PC-3 (cell line): ENCODE measurements at regions of chr7 and their contacts with region 1.

Region 1: DNA sequence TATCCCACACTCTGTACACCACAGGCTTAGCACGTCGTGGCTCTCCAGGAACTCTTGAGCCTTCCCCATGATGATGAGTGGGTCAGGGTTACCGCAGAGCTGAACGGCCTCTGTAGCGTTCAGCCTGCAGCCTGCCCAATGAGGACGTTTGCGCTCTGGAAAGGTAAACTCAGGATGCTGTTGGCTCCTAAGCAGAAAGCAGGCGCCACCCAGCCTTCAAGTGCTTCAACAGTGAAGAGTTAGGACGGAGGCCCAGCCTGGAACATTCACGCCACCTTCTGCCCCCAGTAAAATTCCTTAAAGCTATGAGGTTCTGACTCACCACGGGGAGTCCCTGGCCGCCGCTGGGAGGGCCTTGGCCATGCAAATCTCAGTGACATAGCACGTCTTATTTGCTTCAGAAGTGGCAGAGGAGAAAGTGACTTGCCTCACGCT is 161.5 kb upstream of the SH2B2 start:
- DNase-seq: peak; percentile 91
- ATAC-seq: peak; percentile 99
- H3K4me3 ChIP-seq: no peak overlapping the region
- H3K27ac ChIP-seq: peak overlapping the region; percentile 79
- H3K4me1 ChIP-seq: peaks cover 28% of the 10 kb centered on the region
- H3K27me3 ChIP-seq: no peaks in the 10 kb centered on the region
- CTCF ChIP-seq: peak; percentile 57

Region 2: DNA sequence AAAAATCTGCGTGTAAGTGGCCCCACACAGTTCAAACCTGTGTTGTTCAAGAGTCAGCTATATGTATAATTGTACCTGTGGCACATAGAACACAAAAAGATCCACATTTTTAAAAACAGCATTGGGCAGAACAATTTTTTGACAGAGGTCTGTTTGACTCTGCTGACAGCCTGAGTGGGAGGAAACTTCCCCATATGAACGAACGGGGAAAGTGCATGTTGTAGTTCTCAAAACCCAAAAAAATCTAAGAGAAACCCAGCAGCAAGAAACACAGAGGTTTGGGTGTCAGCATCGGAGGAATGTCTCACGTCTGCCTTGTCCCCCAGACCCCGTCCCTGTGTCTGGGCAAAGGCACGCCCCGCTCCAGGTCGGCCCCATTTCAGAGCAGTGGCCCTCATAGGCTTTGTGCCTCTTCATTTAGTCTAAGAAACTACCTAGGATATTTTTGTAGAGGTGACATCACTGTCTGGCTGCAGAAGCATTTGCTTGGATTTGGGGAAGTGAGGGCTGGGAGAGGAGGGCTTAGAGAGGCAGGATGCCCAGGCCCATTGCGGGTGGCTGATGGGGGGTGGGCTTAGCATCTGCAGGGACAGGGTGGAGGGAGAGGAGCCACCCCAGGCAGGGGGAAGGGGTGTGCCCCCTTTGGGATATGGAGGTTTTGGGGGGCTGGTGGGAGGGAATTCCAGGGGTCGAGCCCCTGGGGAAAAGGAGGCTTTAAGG is 296.7 kb before region 1 on chr7:
- CTCF ChIA-PET with region 1: no interaction called
- POLR2A ChIA-PET with region 1: no interaction called
- intact Hi-C with region 1: no loop called
- DNase-seq: no peak
- ATAC-seq: no peak
- H3K4me3 ChIP-seq: no peak overlapping the region
- H3K27ac ChIP-seq: no peak overlapping the region
- H3K4me1 ChIP-seq: no peaks in the 10 kb centered on the region
- H3K27me3 ChIP-seq: no peaks in the 10 kb centered on the region
- CTCF ChIP-seq: no peak

Region 3: DNA sequence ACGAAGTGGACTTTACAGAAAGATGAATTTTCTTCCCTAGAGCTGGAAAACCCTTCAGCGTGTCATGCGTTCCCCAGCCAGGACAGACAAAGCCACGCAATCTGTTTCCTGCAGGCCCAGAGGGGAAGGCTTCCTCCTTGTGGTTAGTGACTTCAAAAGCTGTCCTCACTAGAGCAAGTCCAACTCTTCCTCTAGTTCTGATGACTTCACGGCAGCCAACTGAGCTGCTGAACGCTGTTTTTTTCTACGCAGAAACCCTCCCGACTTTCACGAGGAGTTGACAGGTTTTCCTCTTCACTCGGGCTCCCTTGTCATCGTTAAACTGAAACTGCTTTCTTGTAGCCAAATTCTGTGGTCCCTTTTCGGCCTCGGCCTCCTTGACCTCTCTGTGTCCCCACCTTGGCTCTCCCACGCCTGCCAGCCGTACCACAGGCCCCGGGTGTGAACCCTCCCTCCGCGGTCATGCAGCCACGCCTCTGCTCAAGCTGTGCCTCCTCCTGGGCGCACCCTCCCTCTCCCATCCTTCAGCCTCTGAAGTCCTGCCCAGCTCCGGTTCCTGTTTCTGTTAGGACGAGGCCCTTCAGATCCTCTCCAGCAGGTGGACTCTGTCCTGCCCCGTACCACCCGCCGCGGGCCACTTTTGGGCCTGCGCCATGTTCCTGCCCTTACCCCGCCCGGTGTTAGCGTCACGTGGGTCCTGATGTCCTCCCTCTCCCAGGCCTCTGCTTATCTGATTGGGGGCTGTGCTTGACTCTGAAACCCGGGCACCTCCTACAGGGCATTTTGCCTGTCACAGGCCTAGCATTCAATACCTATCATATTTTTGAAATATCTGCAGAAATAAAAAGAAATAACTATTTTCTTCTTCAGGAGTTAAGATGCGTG is 268.4 kb before region 1 on chr7:
- CTCF ChIA-PET with region 1: no interaction called
- POLR2A ChIA-PET with region 1: no interaction called
- intact Hi-C with region 1: loop called (anchors 10 kb)
- DNase-seq: peak; percentile 94
- ATAC-seq: peak; percentile 96
- H3K4me3 ChIP-seq: peak overlapping the region; percentile 56
- H3K27ac ChIP-seq: peak overlapping the region; percentile 90
- H3K4me1 ChIP-seq: peaks cover 23% of the 10 kb centered on the region
- H3K27me3 ChIP-seq: no peaks in the 10 kb centered on the region
- CTCF ChIP-seq: peak; percentile 62

Region 4: DNA sequence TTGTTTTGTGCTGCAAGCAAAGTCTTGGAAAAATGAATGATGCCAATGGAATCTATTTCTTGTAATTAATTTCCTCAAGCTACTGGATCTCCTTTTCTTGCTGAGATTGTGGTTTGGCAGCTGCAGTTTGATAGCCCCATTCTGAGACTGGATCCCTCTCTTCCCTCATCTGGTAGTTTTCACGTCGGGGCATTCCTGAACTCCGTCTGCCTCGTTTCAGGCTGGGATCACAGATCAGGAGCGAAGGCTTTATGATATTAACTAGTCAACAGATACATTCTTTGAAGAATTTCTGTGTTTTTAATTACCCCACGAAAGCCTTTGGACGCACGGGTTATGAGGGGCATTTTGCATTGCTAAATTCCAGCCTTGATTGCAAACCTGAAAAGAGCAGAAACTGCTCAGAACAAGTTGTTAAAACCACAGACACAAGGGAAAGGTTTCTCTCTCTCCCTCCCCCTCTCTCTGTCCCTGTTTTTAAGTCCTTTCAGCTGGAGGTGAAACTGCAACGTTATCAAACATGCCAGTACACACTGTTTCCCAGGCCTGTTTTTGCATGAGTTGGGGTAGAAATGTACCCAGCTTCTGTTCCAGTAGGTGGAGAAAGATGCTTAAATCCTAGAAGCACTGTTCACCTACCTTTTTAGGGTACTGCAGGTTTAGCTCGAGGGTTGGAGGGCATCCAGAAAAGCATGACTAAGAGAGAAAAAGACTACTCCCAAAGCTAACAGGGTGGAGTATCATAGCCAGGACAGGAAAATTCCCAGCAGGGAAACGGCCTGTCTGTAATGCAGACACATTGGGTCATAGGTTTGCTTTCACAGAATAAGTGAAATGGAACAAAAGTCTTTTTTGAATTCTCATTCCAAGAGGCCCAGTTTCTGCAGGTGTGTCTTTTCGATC is 183.4 kb before region 1 on chr7:
- CTCF ChIA-PET with region 1: interaction called, 4 read pairs
- POLR2A ChIA-PET with region 1: no interaction called
- intact Hi-C with region 1: loop called (anchors 5 kb)
- DNase-seq: peak; percentile 96
- ATAC-seq: peak; percentile 93
- H3K4me3 ChIP-seq: peak overlapping the region; percentile 48; the same call in 1 of the 2 replicates
- H3K27ac ChIP-seq: peak overlapping the region; percentile 98
- H3K4me1 ChIP-seq: peaks cover 37% of the 10 kb centered on the region
- H3K27me3 ChIP-seq: no peaks in the 10 kb centered on the region
- CTCF ChIP-seq: peak; percentile 41

Region 5: GRCh38 chr7:102040569-102040968 is 84.6 kb before region 1 on chr7:
- CTCF ChIA-PET with region 1: interaction called, 12 read pairs
- POLR2A ChIA-PET with region 1: no interaction called
- intact Hi-C with region 1: no loop called
- DNase-seq: no peak
- ATAC-seq: no peak
- H3K4me3 ChIP-seq: no peak overlapping the region
- H3K27ac ChIP-seq: no peak overlapping the region
- H3K4me1 ChIP-seq: peaks cover 11% of the 10 kb centered on the region
- H3K27me3 ChIP-seq: no peaks in the 10 kb centered on the region
- CTCF ChIP-seq: no peak

Region 6: DNA sequence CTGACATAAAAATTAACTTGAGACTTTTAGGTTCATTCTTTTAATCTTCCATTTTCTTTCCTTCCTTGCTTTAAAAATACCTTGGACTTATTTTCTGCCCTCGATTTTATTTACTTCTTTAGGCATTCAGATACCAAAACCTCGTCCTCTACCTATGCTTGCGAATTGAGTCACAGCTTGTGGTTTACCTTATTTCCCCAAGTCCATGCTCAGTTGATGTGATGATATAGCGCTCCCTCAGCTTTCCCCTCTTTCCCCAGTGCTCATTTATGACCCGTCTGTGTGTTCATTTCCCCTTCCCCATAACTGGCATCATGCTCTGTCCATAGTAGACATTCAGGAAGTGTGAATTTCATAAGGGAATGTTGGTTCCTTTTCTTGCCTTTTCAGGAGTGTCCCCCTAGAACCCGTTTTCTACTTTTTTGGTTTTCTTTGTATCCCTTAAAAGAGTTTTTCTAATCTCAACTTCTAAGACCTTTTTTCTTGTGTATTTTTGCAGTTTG is 251.9 kb after region 1 on chr7:
- CTCF ChIA-PET with region 1: no interaction called
- POLR2A ChIA-PET with region 1: no interaction called
- intact Hi-C with region 1: no loop called
- DNase-seq: no peak
- ATAC-seq: no peak
- H3K4me3 ChIP-seq: no peak overlapping the region
- H3K27ac ChIP-seq: no peak overlapping the region
- H3K4me1 ChIP-seq: no peaks in the 10 kb centered on the region
- H3K27me3 ChIP-seq: no peaks in the 10 kb centered on the region
- CTCF ChIP-seq: no peak